Activated T-helper 1 cell treated with anti-CD3 and anti-CD28 coated beads, Interleukin-12 subunit alpha, Interleukin-12 subunit beta, Interleukin-2, Interleukin-4 antibody, amounts not matched to agents 30 ng/mL and 10 ng/mL and 1 ng/mL, durations not matched to agents 14 hours and 24 hours and 36 hours (primary cell): ENCODE measurements at regions of chrX and their contacts with region 1.

Region 1: DNA sequence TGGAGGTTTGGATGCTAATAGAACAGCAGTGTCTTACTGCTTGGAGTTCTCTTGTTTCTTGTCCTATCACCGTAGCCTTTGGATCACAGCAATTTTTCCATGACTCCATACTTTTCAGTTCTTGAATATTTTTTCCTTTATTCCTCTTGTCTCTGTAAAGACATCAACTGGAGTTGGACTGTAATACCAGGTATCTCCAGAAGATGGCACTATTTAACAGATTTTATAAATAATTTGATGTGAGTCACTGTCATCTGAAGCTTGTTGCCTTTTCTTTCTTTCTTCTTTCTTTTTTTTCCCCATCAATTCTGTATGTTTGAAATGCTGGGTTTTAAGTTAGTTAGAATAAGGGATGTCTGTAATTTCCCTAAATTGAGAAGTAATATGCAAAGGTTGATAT is 24.1 kb downstream of the HPRT1 start:
- DNase-seq: no peak
- H3K4me3 Mint-ChIP-seq: no peak overlapping the region
- H3K27ac Mint-ChIP-seq: no peak overlapping the region
- H3K4me1 Mint-ChIP-seq: no peaks in the 10 kb centered on the region
- H3K27me3 Mint-ChIP-seq: no peaks in the 10 kb centered on the region

Region 2: GRCh38 chrX:134520860-134521390 is 36.9 kb after region 1 on chrX:
- intact Hi-C with region 1: loop called (anchors 1 kb)
- DNase-seq: no peak
- H3K4me3 Mint-ChIP-seq: no peak overlapping the region
- H3K27ac Mint-ChIP-seq: no peak overlapping the region
- H3K4me1 Mint-ChIP-seq: peaks cover 10% of the 10 kb centered on the region
- H3K27me3 Mint-ChIP-seq: no peaks in the 10 kb centered on the region

Region 3: DNA sequence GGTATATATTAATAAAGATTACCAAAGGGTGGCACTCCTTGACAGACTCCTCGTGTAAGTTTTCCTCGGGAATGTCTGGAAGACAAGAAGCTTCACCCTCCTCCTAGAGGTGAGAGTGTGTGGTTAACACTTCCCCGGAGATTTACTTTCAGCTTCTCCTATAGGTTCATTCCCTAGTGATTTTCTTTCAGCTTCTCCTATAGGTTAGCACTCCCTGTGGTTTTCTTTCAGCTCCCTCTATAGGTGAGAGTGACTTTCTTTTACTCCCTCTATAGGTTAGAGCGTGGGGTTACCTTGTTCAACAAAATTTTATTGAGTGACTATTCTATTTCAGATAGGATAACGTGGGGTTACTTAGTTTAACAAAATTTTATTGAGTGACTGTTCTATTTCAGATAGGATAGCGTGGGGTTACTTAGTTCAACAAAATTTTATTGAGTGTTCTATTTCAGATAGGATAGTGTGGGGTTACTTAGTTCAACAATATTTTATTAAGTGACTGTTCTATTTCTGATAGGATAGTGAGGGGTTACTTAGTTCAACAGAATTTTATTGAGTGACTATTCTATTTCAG is 280.3 kb after region 1 on chrX:
- intact Hi-C with region 1: loop called (anchors 1 kb)
- DNase-seq: no peak
- H3K4me3 Mint-ChIP-seq: no peak overlapping the region
- H3K27ac Mint-ChIP-seq: no peak overlapping the region
- H3K4me1 Mint-ChIP-seq: no peaks in the 10 kb centered on the region
- H3K27me3 Mint-ChIP-seq: no peaks in the 10 kb centered on the region

Region 4: DNA sequence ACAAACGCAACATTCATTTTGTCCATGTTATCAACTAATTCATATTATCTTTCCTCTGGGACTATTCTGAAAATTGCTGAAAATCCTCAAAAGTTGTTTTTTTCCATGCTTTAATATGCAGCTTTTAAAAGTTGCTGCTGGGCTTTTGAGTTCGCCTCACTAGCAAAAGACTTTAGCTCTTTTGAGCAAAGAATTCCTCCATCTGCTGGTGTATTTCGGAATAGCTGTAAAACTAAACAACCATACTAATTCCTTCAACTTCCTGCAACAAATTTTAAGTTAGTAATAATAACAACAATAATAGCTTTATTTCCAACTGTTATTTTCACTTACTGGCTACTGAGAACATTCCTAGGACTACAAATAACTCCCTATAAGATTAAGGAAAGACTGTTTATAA is 298.8 kb after region 1 on chrX:
- intact Hi-C with region 1: loop called (anchors 1 kb)
- DNase-seq: no peak
- H3K4me3 Mint-ChIP-seq: no peak overlapping the region
- H3K27ac Mint-ChIP-seq: no peak overlapping the region
- H3K4me1 Mint-ChIP-seq: no peaks in the 10 kb centered on the region
- H3K27me3 Mint-ChIP-seq: no peaks in the 10 kb centered on the region